SK-N-SH (cell line): ENCODE measurements at regions of chr19 and their contacts with region 1.

Region 1: GRCh38 chr19:12796146-12797071 is 5.1 kb downstream of the JUNB start:
- DNase-seq: peak; percentile 77
- H3K4me3 ChIP-seq: peak overlapping the region in 1 of 2 experiments; percentile 38; a peak in 1 of 4 replicates
- H3K27ac ChIP-seq: peak overlapping the region in 1 of 2 experiments; percentile 36; a peak in 1 of 4 replicates
- H3K4me1 ChIP-seq: peaks cover 9 to 23% of the 10 kb centered on the region in 2 experiments; a peak in 1 of 4 replicates
- H3K27me3 ChIP-seq: no peaks in the 10 kb centered on the region
- CTCF ChIP-seq: peak; percentile 87
- EP300 ChIP-seq: no peak
- RAD21 ChIP-seq: peak; percentile 99

Region 2: DNA sequence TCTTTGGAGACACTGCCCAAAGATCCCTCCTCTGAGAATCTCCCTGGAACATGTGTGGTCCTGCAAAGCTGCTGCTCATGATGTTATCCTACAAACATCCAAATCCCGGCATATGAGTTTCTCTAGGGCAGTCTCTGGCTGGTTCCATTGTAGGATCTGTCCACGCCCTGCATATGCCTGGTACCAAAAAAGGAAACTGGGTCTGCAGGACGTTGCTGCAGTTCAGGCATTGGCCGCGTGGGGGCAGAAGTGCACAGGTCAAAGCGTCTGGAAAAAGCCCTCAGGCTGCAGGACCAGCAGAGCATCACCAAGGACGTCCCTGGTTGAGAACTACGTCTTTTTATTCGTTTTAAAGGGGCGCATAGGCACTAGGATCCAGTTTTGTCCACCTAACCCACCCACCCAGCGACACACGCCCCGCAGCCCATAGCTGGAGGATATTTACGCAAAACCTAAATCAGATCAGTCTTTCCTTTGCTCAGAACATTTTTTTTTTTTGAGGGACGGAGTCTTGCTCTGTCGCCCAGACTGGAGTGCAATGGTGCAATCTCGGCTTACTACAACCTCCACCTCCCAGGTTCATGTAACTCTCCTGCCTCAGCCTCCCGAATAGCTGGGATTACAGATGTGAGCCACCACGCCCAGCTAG is 232.3 kb before region 1 on chr19:
- CTCF ChIA-PET with region 1: no interaction called
- POLR2A ChIA-PET with region 1: no interaction called
- DNase-seq: peak; percentile 90
- H3K4me3 ChIP-seq: peak overlapping the region; percentile 9 to 36; a peak in 2 of 4 replicates
- H3K27ac ChIP-seq: no peak overlapping the region
- H3K4me1 ChIP-seq: peaks cover 0 to 3% of the 10 kb centered on the region in 2 experiments; a peak in 1 of 4 replicates
- H3K27me3 ChIP-seq: no peaks in the 10 kb centered on the region
- CTCF ChIP-seq: peak; percentile 96
- EP300 ChIP-seq: no peak
- RAD21 ChIP-seq: peak; percentile 90

Region 3: DNA sequence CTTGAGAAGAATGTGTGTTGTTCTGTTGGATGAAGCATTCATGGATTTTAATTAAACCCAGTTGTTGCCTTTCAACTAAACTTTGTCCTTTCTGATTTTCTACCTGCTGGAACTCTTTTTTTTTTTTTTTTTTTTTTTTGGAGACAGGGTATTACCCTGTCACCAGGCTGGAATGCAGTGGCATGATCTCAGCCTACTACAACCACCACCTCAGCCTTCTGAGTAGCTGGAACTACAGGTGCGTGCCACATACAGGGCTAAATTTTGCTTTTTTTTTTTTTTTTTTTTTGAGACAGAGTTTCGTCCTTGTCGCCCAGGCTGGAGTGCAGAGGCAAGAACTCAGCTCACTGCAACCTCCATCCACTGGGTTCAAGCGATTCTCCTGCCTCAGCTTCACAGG is 178.8 kb before region 1 on chr19:
- CTCF ChIA-PET with region 1: no interaction called
- POLR2A ChIA-PET with region 1: no interaction called
- DNase-seq: no peak
- H3K4me3 ChIP-seq: no peak overlapping the region
- H3K27ac ChIP-seq: no peak overlapping the region
- H3K4me1 ChIP-seq: no peaks in the 10 kb centered on the region; a peak in 1 of 4 replicates
- H3K27me3 ChIP-seq: no peaks in the 10 kb centered on the region
- CTCF ChIP-seq: no peak
- EP300 ChIP-seq: no peak
- RAD21 ChIP-seq: no peak

Region 4: GRCh38 chr19:12722566-12723380 is 73.6 kb before region 1 on chr19:
- CTCF ChIA-PET with region 1: interaction called, 25 read pairs
- POLR2A ChIA-PET with region 1: interaction called, 5 read pairs
- DNase-seq: peak; percentile 96
- H3K4me3 ChIP-seq: peak overlapping the region; percentile 63 to 85
- H3K27ac ChIP-seq: peak overlapping the region; percentile 89
- H3K4me1 ChIP-seq: peaks cover 7 to 8% of the 10 kb centered on the region in 2 experiments; a peak in 3 of 4 replicates
- H3K27me3 ChIP-seq: no peaks in the 10 kb centered on the region
- CTCF ChIP-seq: no peak
- EP300 ChIP-seq: no peak
- RAD21 ChIP-seq: no peak

Region 5: GRCh38 chr19:12736995-12737834 is 59.2 kb before region 1 on chr19 and contains the start of gene GET3:
- CTCF ChIA-PET with region 1: interaction called, 19 read pairs
- POLR2A ChIA-PET with region 1: interaction called, 5 read pairs
- DNase-seq: peak; percentile 86
- H3K4me3 ChIP-seq: peak within 1 kb of the TSS; percentile 83 to 84
- H3K27ac ChIP-seq: peak within 1 kb of the TSS; percentile 84 to 96
- H3K4me1 ChIP-seq: peaks cover 9 to 28% of the 10 kb centered on the region in 2 experiments; a peak in 1 of 4 replicates
- H3K27me3 ChIP-seq: no peaks in the 10 kb centered on the region
- CTCF ChIP-seq: no peak
- EP300 ChIP-seq: no peak
- RAD21 ChIP-seq: no peak
- polyA plus RNA-seq, gene GET3: 250 and 264 TPM in 2 replicates

Region 6: DNA sequence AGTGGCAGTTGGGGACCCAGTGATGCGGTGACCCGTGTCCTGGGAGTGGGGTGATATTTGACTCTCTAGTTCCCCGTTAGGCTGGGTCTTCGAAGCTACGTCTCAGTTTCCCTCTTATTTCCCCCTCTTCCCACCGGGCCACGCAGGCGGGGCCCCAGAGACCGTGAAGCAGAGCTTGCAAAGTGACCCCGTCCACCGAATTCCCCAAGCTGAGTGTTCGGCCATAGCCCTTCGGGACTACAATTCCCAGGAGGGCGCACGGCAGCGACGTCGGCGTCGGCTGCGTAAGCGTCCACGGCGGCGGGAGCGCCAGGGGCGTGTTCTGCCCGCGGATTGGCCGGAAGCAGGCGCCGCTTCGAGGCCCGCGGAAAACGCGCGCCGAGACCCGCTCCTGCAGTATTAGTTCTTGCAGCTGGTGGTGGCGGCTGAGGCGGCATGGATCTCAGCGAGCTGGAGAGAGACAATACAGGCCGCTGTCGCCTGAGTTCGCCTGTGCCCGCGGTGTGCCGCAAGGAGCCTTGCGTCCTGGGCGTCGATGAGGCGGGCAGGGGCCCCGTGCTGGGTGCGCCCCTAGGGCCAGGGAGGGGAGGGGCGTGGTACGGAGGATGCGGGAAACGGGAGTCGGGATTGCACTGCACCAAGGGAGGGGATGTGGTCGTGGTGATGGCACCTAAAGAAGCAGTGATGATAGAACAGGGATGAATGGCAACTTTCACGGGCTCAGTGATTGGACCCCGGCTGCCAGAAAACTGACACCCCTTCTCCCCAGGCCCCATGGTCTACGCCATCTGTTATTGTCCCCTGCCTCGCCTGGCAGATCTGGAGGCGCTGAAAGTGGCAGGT is 10.1 kb after region 1 on chr19 and contains the start of gene RNASEH2A:
- CTCF ChIA-PET with region 1: interaction called, 13 read pairs
- POLR2A ChIA-PET with region 1: interaction called, 20 read pairs
- DNase-seq: peak; percentile 95
- H3K4me3 ChIP-seq: peak within 1 kb of the TSS; percentile 68 to 75
- H3K27ac ChIP-seq: peak within 1 kb of the TSS in 1 of 2 experiments; percentile 64; a peak in 2 of 4 replicates
- H3K4me1 ChIP-seq: peaks cover 4 to 18% of the 10 kb centered on the region in 2 experiments; a peak in 1 of 4 replicates
- H3K27me3 ChIP-seq: no peaks in the 10 kb centered on the region
- CTCF ChIP-seq: no peak; the same call in 1 of the 2 replicates
- EP300 ChIP-seq: no peak; a peak in 1 of 4 replicates
- RAD21 ChIP-seq: no peak
- polyA plus RNA-seq, gene RNASEH2A: 35.2 and 48.1 TPM in 2 replicates

Region 7: GRCh38 chr19:12825254-12826131 is 29.1 kb after region 1 on chr19:
- CTCF ChIA-PET with region 1: interaction called, 14 read pairs
- POLR2A ChIA-PET with region 1: interaction called, 5 read pairs
- DNase-seq: peak; percentile 88
- H3K4me3 ChIP-seq: peak overlapping the region in 1 of 2 experiments; percentile 15; a peak in 1 of 4 replicates
- H3K27ac ChIP-seq: no peak overlapping the region
- H3K4me1 ChIP-seq: peaks cover 0 to 8% of the 10 kb centered on the region in 2 experiments; a peak in 1 of 4 replicates
- H3K27me3 ChIP-seq: no peaks in the 10 kb centered on the region
- CTCF ChIP-seq: peak; percentile 48
- EP300 ChIP-seq: no peak
- RAD21 ChIP-seq: peak; percentile 36